CD8-positive, alpha-beta T cell (primary cell): ENCODE measurements at regions of chr1 and their contacts with region 1.

Region 1: DNA sequence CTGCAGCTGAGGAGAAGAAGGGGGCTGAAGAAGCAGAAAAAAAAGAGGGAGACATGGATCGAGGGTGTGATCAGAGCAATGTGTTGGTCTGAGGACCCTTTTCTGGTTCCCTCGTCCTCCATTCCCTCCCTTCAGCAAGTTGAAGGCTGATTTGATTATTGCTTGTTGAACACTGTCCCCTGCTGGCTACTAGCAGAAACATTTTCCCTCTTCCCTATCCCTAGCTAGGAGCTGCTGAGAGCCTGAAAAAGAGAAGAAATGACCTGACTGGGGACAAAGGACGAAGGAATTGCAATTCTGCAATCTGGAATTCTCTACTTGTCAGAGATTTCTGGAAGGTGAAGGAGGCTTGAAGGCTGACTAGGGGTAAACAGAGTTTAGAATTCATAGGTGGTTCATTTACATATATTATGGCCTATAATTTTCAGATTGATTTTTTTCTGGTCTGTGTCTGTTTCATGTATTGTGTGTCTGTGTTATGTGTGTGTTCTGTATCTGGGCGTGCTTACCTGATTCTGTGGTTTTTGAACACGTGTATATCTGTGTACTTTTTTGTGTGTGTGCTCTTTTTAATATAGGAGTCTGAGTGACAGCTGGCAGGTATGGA is 9.8 kb downstream of the NHLH1 start:
- DNase-seq: peak in 5 of 9 experiments; percentile 13 to 75 (median 53)
- ATAC-seq: peak; percentile 61
- H3K4me3 ChIP-seq: no peak overlapping the region
- H3K4me3 Mint-ChIP-seq: no peak overlapping the region
- H3K27ac ChIP-seq: no peak overlapping the region
- H3K27ac Mint-ChIP-seq: no peak overlapping the region
- H3K4me1 ChIP-seq: peaks cover 12% of the 10 kb centered on the region
- H3K4me1 Mint-ChIP-seq: peaks cover 15% of the 10 kb centered on the region
- H3K27me3 ChIP-seq: no peaks in the 10 kb centered on the region
- H3K27me3 Mint-ChIP-seq: no peaks in the 10 kb centered on the region
- CTCF ChIP-seq: peak; percentile 65

Region 2: DNA sequence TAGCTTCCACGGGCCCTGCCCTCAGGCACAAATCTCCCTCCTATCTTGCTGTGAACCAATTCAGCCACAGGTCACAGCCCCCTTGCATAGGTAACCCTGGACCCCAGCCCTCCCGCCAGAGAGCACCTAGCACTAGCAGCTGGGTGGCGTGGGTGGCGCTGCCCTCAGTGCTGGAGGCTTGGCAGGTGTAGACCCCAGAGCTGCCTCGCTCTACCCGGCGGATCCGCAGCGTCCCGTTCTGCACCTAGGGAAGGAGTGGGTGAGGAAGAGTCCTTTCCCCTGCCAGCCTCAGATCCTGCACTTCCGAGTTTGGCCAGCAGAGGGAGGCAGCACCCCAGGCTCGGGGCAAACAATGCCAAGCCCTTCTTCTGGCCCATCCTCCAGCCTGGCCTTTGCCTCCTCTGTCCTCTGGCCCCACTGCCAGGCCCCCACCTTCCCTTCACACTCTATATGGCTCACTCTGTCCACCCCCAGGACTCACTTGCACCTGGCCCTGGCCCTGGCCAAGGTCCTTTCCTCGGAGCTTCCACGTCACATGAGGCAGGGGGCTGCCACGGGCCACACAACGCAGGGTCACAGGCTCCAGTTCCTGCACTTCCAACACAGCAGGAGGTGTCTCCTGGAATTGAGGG is 440.2 kb before region 1 on chr1:
- CTCF ChIA-PET with region 1: interaction called, 4 read pairs
- POLR2A ChIA-PET with region 1: no interaction called
- intact Hi-C with region 1: loop called in 1 of 2 experiments (anchors 5 kb)
- DNase-seq: peak; percentile 66 to 90 (median 82)
- ATAC-seq: peak; percentile 96
- H3K4me3 ChIP-seq: no peak overlapping the region
- H3K4me3 Mint-ChIP-seq: no peak overlapping the region
- H3K27ac ChIP-seq: no peak overlapping the region
- H3K27ac Mint-ChIP-seq: no peak overlapping the region
- H3K4me1 ChIP-seq: peaks cover 4% of the 10 kb centered on the region
- H3K4me1 Mint-ChIP-seq: peaks cover 6% of the 10 kb centered on the region
- H3K27me3 ChIP-seq: no peaks in the 10 kb centered on the region
- H3K27me3 Mint-ChIP-seq: peaks cover 11% of the 10 kb centered on the region
- CTCF ChIP-seq: peak; percentile 97

Region 3: GRCh38 chr1:160193091-160193819 is 183.4 kb before region 1 on chr1:
- CTCF ChIA-PET with region 1: interaction called, 33 read pairs
- POLR2A ChIA-PET with region 1: no interaction called
- intact Hi-C with region 1: loop called in 1 of 2 experiments (anchors 1 kb)
- DNase-seq: peak; percentile 58 to 89 (median 81)
- ATAC-seq: peak; percentile 95
- H3K4me3 ChIP-seq: no peak overlapping the region
- H3K4me3 Mint-ChIP-seq: no peak overlapping the region
- H3K27ac ChIP-seq: no peak overlapping the region
- H3K27ac Mint-ChIP-seq: no peak overlapping the region
- H3K4me1 ChIP-seq: no peaks in the 10 kb centered on the region
- H3K4me1 Mint-ChIP-seq: no peaks in the 10 kb centered on the region
- H3K27me3 ChIP-seq: peaks cover 0 to 2% of the 10 kb centered on the region in 2 experiments
- H3K27me3 Mint-ChIP-seq: no peaks in the 10 kb centered on the region
- CTCF ChIP-seq: peak; percentile 83

Region 4: GRCh38 chr1:161486806-161487741 is 1110.4 kb after region 1 on chr1:
- CTCF ChIA-PET with region 1: no interaction called
- POLR2A ChIA-PET with region 1: no interaction called
- intact Hi-C with region 1: no loop called
- DNase-seq: peak in 8 of 9 experiments; percentile 14 to 83 (median 46)
- ATAC-seq: peak; percentile 57
- H3K4me3 ChIP-seq: no peak overlapping the region
- H3K4me3 Mint-ChIP-seq: no peak overlapping the region
- H3K27ac ChIP-seq: no peak overlapping the region
- H3K27ac Mint-ChIP-seq: no peak overlapping the region
- H3K4me1 ChIP-seq: peaks cover 10% of the 10 kb centered on the region
- H3K4me1 Mint-ChIP-seq: peaks cover 11% of the 10 kb centered on the region
- H3K27me3 ChIP-seq: no peaks in the 10 kb centered on the region
- H3K27me3 Mint-ChIP-seq: peaks cover 23% of the 10 kb centered on the region
- CTCF ChIP-seq: peak; percentile 81